Naive thymus-derived CD8-positive, alpha-beta T cell (primary cell): ENCODE measurements at regions of chr9 and their contacts with region 1.

Region 1: GRCh38 chr9:136410500-136411287 is at the starts of genes ENTR1 and PMPCA:
- DNase-seq: peak; percentile 91 to 97 (median 94)
- ATAC-seq: peak; percentile 83 to 92
- H3K4me3 Mint-ChIP-seq: peak within 1 kb of the TSS; percentile 86 to 92 (median 89)
- H3K27ac Mint-ChIP-seq: peak within 1 kb of the TSS; percentile 83 to 96 (median 94)
- H3K4me1 Mint-ChIP-seq: peaks cover 16 to 60% (median 40%) of the 10 kb centered on the region in 4 donors
- H3K27me3 Mint-ChIP-seq: no peaks in the 10 kb centered on the region
- polyA plus RNA-seq, gene ENTR1: 9.7 to 16.8 (median 11.4) TPM
- polyA plus RNA-seq, gene PMPCA: 37.0 to 47.0 (median 42.1) TPM

Region 2: DNA sequence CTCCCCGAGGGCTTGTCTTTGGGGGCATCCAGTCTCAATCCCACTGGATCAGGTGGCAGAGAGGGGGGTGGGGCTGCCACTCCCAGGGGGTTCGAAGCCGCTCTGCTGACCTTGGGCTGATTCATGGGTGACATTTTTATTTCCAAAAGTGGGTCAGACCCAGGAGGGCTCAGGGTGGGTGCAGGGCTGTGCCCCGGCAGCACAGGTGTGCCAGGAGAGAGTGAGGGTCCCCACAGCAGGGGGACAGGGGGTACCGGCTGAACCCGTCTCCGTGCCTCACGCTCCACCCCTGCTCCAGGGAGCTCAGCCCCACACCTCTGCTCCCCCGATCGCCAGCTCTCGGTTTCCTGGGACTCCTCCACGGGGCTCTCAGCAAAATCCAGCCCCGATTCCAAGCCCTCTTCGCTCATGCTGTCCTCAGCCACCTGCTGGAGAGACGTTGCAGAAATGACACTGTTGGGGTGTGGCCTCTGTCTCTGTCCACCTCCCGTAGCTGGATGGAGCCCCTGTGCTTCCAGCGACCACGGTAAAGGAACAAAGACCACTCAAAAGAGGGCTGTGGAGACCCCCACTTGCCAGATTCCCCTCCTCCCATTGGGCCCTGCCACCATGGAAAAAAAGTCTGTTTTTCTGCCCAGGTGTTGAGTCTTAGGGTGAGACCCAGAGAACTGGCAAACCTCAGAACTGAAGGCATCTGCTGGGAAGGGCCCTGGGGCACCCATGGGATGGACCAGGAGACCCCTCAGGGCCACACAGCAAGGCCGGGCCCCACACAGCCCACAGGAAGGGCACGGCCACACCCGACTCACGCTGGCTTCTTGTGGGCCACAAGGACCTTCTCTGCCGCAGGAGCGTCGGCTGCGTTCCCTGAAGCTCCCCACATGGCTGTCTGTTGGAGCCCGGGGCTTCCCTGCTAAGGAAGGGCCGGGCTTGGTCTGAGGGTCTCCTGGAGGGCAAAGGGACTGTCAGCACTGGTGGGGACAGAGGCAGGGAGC is 154.5 kb before region 1 on chr9:
- POLR2A ChIA-PET with region 1: no interaction called
- DNase-seq: no peak
- ATAC-seq: no peak
- H3K4me3 Mint-ChIP-seq: no peak overlapping the region
- H3K27ac Mint-ChIP-seq: peak overlapping the region in 1 of 10 donors; percentile 71
- H3K4me1 Mint-ChIP-seq: no peaks in the 10 kb centered on the region
- H3K27me3 Mint-ChIP-seq: no peaks in the 10 kb centered on the region

Region 3: GRCh38 chr9:136363606-136364370 is 46.9 kb before region 1 on chr9 and contains the start of gene DNLZ:
- POLR2A ChIA-PET with region 1: interaction called, 11 read pairs
- DNase-seq: peak; percentile 72 to 90 (median 86)
- ATAC-seq: peak; percentile 81
- H3K4me3 Mint-ChIP-seq: peak within 1 kb of the TSS; percentile 70 to 90 (median 81)
- H3K27ac Mint-ChIP-seq: peak within 1 kb of the TSS in 9 of 10 donors; percentile 40 to 93 (median 88)
- H3K4me1 Mint-ChIP-seq: peaks cover 0 to 6% (median 3%) of the 10 kb centered on the region in 4 donors
- H3K27me3 Mint-ChIP-seq: no peaks in the 10 kb centered on the region
- polyA plus RNA-seq, gene DNLZ: 51.6 to 58.1 (median 52.9) TPM